RWPE1 (cell line): ENCODE measurements at regions of chr2 and their contacts with region 1.

Region 1: GRCh38 chr2:203143391-203143790 is 95.4 kb upstream of the CYP20A1 start:
- DNase-seq: no peak
- H3K27ac ChIP-seq: no peak overlapping the region
- CTCF ChIP-seq: no peak

Region 2: DNA sequence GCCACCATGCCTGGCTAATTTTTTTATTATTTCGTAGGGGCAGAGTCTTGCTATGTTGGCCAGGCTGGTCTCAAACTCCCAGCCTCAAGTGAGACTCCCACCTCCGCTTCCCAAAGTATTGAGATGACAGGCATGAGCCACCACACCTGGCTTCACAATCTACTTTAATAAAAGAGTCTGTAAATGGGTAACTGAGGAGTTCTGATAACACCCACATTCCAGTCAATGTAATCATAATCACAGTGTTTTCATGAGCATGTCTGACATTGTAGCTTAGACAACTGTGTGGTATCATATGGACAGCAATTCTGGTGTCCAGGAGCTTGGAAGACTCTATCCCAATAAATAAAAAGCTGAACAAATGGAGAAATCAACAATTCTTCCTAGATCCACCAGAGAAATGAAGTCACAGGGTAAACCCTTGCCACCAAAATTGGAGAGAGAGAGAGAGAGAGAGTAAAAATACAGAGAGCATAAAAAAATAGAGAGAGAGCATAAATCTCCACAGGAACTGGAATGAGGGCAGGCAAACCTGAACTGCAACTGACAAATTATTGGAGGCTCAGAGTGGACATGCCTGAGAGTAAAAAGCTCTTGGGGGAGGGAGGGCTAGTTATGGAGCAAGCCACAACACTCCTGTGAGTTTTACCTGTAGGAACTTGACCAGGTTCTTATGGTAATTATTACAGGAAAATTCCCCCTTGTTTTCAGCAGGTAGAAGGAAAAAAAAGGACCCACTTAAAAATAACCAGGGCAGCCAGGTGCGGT is 141.2 kb before region 1 on chr2:
- CTCF ChIA-PET with region 1: no interaction called
- POLR2A ChIA-PET with region 1: no interaction called
- DNase-seq: peak; percentile 27
- H3K27ac ChIP-seq: no peak overlapping the region
- CTCF ChIP-seq: no peak

Region 3: GRCh38 chr2:203112342-203112741 is 31.0 kb before region 1 on chr2:
- CTCF ChIA-PET with region 1: no interaction called
- POLR2A ChIA-PET with region 1: no interaction called
- DNase-seq: no peak
- H3K27ac ChIP-seq: no peak overlapping the region
- CTCF ChIP-seq: peak; percentile 14; the same call in 1 of the 2 replicates

Region 4: DNA sequence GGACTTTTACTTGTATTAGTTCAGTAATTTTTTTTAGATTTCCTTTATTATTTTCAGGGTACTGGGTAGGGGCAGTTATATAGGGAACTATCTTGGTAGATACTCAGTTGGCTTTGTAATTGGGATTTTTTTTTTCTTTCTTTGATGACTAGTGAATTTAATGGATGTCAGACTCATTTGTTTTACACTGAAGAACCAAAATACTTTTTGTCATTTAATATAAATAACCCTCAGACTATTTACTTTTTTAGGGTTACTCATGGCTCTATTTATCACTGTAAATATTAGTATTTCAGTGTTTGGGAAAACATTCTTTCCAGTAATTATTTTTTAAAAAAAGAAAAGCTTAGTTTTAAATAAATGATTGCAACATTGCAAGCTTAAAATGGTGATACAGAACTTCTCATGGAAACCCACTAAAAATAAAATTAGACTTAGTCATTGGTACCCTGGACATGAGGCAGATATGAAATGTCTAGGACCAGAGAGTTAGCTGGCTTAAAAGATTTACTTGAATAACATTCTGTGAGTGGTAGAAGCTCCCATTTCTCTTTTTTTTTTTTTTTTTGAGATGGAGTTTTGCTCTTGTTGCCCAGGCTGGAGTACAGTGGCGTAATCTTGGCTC is 21.0 kb after region 1 on chr2:
- CTCF ChIA-PET with region 1: no interaction called
- POLR2A ChIA-PET with region 1: interaction called, 14 read pairs
- DNase-seq: no peak
- H3K27ac ChIP-seq: no peak overlapping the region
- CTCF ChIP-seq: no peak

Region 5: DNA sequence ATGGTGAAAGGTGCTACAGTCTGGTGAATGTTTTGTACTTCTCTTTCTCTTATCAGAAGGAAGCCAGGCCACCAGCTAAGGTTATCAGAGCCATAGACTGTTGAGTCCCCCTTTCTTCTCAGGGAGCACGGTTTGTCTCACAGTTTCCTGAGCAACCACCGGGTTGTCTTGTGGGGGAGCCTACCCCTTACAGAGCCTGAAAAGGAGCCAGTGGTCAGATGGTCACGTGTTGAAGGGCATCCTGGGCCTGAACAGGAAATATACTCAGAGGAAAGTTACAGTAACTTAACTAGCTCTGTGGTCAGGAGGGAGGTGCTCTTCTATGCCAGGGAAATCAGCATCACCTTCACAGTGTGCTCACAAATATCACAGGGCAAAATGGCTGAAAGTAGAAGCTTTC is 574.7 kb after region 1 on chr2:
- CTCF ChIA-PET with region 1: no interaction called
- POLR2A ChIA-PET with region 1: no interaction called
- DNase-seq: no peak
- H3K27ac ChIP-seq: no peak overlapping the region
- CTCF ChIP-seq: no peak